Common myeloid progenitor, CD34-positive (primary cell): ENCODE measurements at regions of chr12 and their contacts with region 1.

Region 1: DNA sequence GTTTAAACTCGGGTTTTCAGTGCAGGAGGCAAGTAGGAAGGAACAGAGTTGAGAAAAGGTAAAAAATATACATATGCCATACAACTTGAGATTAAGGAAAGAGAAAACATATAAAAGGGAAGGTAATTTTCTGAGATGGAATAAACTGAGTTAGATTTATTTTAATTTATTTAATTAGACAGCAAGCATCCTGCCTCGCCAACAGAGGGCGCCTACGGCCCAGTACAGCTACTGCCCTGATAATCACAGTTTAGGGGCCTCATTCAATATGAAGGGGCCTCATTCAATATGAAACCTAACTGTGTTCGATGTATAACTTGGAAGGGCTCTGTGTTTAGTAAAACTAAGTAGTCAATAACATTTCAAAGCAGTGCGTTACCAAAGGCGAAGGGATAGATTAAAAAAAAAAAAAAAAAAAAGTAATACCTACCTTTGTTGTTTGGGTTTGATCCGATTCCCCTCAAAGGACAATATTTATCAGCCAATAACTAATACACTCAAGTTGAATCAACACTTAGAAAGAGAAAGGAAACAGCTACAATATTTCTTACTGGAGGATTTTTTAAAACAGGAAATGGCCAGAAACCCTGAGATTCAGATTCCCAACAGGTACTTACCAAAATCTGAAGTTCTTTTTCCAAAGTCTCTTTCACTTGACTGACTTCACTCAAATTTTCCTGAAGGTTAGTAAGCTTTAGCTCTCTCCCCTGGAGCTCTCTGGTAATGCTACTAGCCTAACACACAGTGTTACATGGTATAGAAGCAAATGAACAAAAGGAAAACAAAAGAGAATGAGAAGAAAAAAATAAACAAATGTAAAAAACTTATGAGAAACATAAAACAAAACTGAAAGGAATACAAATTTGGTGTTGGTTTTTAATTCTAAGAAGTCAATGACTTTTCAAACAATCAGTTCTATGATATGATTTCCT is 70.0 kb upstream of the VPS33A start:
- DNase-seq: peak; percentile 59 to 76 (median 74)
- H3K4me3 ChIP-seq: no peak overlapping the region
- H3K27ac ChIP-seq: peak overlapping the region in 1 of 2 experiments; percentile 34
- H3K4me1 ChIP-seq: no peaks in the 10 kb centered on the region
- H3K27me3 ChIP-seq: no peaks in the 10 kb centered on the region

Region 2: DNA sequence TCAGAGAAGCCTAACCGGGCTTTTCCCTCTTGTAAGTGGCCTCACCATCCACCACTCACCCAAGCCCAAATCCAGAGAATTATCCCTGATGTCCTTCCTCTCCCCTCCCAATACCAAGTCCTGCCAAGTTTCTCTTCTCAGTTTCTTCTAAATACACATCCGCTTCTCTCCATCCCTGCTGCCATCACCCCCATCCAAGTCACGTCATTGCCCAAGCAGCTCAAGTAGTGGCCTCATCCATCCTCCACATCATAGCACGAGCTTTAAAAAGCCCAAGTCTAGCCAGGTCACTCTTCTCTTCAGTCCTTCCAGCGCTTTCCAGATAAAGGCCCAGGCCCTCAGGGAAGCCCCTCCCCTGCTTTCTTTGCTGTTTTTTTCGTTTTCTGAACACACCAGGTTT is 187.6 kb before region 1 on chr12:
- CTCF ChIA-PET with region 1: no interaction called
- POLR2A ChIA-PET with region 1: no interaction called
- DNase-seq: no peak
- H3K4me3 ChIP-seq: no peak overlapping the region
- H3K27ac ChIP-seq: no peak overlapping the region
- H3K4me1 ChIP-seq: peaks cover 0 to 1% (median 0%) of the 10 kb centered on the region in 4 experiments
- H3K27me3 ChIP-seq: no peaks in the 10 kb centered on the region

Region 3: DNA sequence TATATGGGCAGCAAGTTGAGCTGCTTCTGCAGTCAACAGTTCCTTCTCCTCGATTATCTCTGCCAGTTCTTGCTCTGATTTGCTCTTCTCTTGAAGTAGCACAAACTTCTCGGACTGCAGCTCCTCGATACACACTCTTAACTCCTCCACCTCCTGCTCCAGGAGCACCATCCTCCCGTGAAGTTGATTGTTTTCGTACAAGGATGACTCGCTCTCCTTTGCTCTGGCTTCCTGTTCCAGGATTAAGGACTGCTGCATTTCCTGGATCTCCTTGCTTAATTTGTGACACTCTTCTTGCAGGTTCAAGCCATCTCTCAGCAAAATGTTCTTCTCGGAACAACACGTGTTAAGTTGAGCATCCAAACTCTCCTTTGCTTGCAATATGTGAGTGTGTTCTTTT is 13.8 kb before region 1 on chr12:
- CTCF ChIA-PET with region 1: interaction called, 14 read pairs
- POLR2A ChIA-PET with region 1: no interaction called
- DNase-seq: no peak
- H3K4me3 ChIP-seq: no peak overlapping the region
- H3K27ac ChIP-seq: no peak overlapping the region
- H3K4me1 ChIP-seq: peaks cover 0 to 9% (median 2%) of the 10 kb centered on the region in 4 experiments
- H3K27me3 ChIP-seq: no peaks in the 10 kb centered on the region

Region 4: GRCh38 chr12:122356192-122356635 is 19.9 kb after region 1 on chr12:
- CTCF ChIA-PET with region 1: interaction called, 28 read pairs
- POLR2A ChIA-PET with region 1: no interaction called
- DNase-seq: peak; percentile 52 to 75 (median 65)
- H3K4me3 ChIP-seq: no peak overlapping the region
- H3K27ac ChIP-seq: no peak overlapping the region
- H3K4me1 ChIP-seq: peaks cover 0 to 3% (median 1%) of the 10 kb centered on the region in 4 experiments
- H3K27me3 ChIP-seq: no peaks in the 10 kb centered on the region

Region 5: DNA sequence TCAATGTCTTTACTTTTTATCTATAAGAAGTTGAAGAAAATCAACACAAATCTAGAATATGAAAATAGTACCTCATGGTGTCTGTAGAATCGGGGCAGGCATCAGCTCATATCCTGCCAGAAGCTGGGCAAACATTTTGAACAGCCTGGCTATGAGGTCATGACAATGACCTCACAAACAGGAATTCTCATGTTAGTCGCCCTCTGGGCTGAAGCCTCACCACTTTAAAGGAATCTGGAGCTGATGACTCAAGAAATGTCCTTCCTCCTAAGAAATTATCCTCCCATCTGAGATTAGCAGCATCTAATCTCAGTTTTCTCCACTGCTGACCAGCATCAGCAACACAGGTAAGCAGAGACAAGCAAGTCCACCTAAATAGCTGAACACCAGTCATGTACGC is 59.0 kb after region 1 on chr12:
- CTCF ChIA-PET with region 1: no interaction called
- POLR2A ChIA-PET with region 1: no interaction called
- DNase-seq: no peak
- H3K4me3 ChIP-seq: no peak overlapping the region
- H3K27ac ChIP-seq: no peak overlapping the region
- H3K4me1 ChIP-seq: peaks cover under 1 to 21% (median 15%) of the 10 kb centered on the region in 4 experiments
- H3K27me3 ChIP-seq: no peaks in the 10 kb centered on the region

Region 6: GRCh38 chr12:122471324-122472226 is 135.3 kb after region 1 on chr12:
- CTCF ChIA-PET with region 1: interaction called, 34 read pairs
- POLR2A ChIA-PET with region 1: no interaction called
- DNase-seq: peak; percentile 67 to 82 (median 77)
- H3K4me3 ChIP-seq: no peak overlapping the region
- H3K27ac ChIP-seq: no peak overlapping the region
- H3K4me1 ChIP-seq: no peaks in the 10 kb centered on the region
- H3K27me3 ChIP-seq: no peaks in the 10 kb centered on the region

Region 7: GRCh38 chr12:122481861-122482260 is 145.6 kb after region 1 on chr12:
- CTCF ChIA-PET with region 1: interaction called, 3 read pairs
- POLR2A ChIA-PET with region 1: interaction called, 10 read pairs
- DNase-seq: no peak
- H3K4me3 ChIP-seq: no peak overlapping the region
- H3K27ac ChIP-seq: no peak overlapping the region
- H3K4me1 ChIP-seq: no peaks in the 10 kb centered on the region
- H3K27me3 ChIP-seq: no peaks in the 10 kb centered on the region